HEK293 (cell line): ENCODE measurements at regions of chr11 and their contacts with region 1.

Region 1: DNA sequence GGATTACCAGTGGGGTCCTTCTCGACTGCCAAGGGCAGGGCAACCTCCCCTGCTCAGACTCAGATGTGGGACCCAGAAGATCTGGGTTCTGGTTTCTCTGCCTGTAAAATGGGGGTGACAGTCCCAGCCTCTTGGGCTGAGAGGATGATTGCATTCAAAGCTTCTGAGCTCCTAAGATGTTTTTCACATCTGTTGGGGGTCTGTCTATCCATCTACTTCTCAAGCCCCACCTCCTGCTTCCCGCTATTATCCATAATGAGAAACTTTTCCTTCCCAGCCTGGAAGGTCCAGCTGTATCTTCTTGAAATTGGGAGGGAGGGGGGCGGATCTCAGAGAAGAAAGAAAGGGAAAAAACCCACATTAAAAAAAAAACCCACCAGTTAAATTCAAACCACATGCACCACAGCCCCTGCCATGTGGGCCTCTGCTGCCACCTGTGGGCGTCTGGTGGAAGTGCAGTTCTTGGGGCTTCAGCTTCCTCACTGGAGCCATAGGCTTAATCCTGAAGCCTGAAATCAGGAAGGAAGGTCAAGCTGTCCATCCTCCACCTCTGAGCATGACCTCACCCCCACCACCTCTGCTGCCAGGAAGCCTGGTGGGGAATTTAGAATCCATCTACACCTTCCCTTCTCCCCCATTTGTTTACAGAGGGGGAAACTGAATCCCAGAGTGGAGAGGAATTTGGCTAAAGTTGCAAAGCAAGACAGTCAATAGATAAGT is 27.3 kb downstream of the ARHGEF17 start:
- H3K4me3 ChIP-seq: no peak overlapping the region
- H3K27ac ChIP-seq: no peak overlapping the region; the same call in 1 of the 2 replicates
- H3K4me1 ChIP-seq: peaks cover 4% of the 10 kb centered on the region; the same call in 1 of the 2 replicates
- CTCF ChIP-seq: peak; percentile 73

Region 2: DNA sequence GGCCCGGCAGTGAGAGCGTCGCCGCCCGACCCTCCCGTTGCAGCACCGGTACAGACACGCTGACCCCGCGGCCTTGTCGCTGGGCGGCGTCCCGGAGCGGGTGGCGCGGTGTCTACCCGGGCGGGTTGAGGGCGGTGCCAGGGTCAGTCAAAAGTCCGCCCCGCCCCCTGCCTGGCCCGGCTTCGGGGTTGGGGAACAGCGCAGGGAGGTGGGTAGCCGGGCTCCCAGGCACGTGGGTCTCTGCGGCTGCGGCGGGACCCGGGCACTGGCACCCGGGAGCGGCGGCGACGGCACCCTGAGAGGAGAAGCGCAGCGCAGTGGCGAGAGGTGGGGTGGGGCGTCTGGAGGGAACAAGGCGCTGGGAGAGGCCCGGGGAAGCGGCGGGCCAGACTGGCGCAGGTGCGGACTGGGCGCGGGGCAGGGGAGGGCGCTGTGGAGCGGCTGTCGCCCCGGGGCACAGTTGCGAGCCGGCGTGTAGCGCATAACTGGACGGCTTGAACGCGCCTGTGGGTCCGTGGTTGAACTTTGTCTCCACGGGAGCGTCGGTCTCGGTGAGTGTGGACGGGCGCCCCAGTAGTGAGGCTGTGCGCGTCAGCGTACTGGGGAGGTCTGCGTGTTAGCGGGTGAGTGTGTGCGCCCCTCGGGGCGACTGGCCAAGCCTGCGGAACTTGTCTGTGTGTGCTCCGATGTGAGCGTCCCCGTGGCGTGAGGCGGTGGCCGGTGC is 117.1 kb before region 1 on chr11 and contains the start of gene P2RY2:
- CTCF ChIA-PET with region 1: no interaction called
- POLR2A ChIA-PET with region 1: no interaction called
- H3K4me3 ChIP-seq: peak within 1 kb of the TSS; percentile 41
- H3K27ac ChIP-seq: no peak within 1 kb of the TSS; the same call in 1 of the 2 replicates
- H3K4me1 ChIP-seq: no peaks in the 10 kb centered on the region
- CTCF ChIP-seq: peak; percentile 76

Region 3: DNA sequence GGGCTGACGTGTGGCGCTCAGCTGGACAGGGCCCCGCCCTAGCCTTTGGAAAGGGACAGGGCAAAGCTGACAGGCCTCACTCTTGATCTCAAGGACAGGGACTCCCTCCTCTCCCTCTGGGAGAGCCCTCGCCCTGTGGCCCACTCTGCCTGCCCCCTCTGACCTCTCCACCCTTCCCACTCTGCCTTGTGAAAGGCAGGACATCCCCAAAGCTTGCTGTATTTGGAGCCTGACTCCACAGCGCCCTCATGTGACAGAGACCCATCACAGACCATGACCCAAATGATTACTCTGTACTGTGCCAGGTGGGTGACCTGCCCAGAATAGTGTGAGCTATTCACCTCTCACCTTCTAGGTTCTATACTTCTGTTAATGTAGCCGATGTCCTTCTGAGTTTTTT is 98.5 kb before region 1 on chr11:
- CTCF ChIA-PET with region 1: interaction called, 12 read pairs
- POLR2A ChIA-PET with region 1: no interaction called
- H3K4me3 ChIP-seq: no peak overlapping the region
- H3K27ac ChIP-seq: no peak overlapping the region
- H3K4me1 ChIP-seq: no peaks in the 10 kb centered on the region
- CTCF ChIP-seq: peak; percentile 22; the same call in 1 of the 2 replicates

Region 4: GRCh38 chr11:73288873-73289707 is 46.3 kb before region 1 on chr11:
- CTCF ChIA-PET with region 1: interaction called, 39 read pairs
- POLR2A ChIA-PET with region 1: no interaction called
- H3K4me3 ChIP-seq: peak overlapping the region; percentile 29
- H3K27ac ChIP-seq: no peak overlapping the region; the same call in 1 of the 2 replicates
- H3K4me1 ChIP-seq: no peaks in the 10 kb centered on the region
- CTCF ChIP-seq: peak; percentile 83

Region 5: DNA sequence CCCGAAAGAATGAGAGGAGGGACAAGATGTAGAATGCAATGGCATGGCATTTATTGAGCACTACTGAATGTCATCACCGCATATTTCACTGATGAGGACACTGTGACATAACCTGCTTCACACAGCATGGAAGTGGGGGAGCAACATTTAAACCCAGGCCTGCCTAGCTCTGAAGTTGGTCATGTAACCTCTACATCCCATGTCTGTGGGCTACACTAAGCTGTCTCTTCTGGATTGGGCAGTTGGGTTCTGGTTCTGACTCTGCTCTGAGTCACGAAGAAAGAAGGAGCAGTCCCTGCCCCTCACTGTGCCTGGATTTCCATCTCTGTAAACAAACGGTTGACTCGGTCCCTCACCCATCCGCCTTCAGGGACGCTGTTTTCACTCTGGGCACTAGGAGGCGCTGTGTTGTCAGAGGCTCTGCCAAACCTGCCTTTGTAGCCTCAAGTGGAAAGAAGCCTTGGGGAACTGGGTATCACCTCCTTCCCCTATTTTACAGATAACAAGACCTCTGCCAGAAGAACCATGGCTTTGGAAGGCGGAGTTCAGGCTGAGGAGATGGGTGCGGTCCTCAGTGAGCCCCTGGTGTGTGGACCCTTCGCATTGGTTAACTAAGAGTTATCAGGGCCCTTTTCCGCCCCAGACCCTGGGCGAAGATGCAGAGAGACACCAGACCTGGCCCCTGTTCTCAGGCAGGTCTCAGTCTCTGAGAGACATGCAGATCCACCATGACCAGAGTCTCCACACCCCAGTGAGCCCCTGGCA is 40.0 kb before region 1 on chr11:
- CTCF ChIA-PET with region 1: interaction called, 39 read pairs
- POLR2A ChIA-PET with region 1: no interaction called
- H3K4me3 ChIP-seq: no peak overlapping the region
- H3K27ac ChIP-seq: no peak overlapping the region
- H3K4me1 ChIP-seq: no peaks in the 10 kb centered on the region
- CTCF ChIP-seq: no peak

Region 6: GRCh38 chr11:73314117-73314961 is 21.0 kb before region 1 on chr11:
- CTCF ChIA-PET with region 1: interaction called, 185 read pairs
- POLR2A ChIA-PET with region 1: interaction called, 30 read pairs
- H3K4me3 ChIP-seq: no peak overlapping the region
- H3K27ac ChIP-seq: no peak overlapping the region
- H3K4me1 ChIP-seq: 0 out of 2 replicates have a peak, but pooled peaks cover 7% of the 10 kb centered on the region
- CTCF ChIP-seq: no peak

Region 7: DNA sequence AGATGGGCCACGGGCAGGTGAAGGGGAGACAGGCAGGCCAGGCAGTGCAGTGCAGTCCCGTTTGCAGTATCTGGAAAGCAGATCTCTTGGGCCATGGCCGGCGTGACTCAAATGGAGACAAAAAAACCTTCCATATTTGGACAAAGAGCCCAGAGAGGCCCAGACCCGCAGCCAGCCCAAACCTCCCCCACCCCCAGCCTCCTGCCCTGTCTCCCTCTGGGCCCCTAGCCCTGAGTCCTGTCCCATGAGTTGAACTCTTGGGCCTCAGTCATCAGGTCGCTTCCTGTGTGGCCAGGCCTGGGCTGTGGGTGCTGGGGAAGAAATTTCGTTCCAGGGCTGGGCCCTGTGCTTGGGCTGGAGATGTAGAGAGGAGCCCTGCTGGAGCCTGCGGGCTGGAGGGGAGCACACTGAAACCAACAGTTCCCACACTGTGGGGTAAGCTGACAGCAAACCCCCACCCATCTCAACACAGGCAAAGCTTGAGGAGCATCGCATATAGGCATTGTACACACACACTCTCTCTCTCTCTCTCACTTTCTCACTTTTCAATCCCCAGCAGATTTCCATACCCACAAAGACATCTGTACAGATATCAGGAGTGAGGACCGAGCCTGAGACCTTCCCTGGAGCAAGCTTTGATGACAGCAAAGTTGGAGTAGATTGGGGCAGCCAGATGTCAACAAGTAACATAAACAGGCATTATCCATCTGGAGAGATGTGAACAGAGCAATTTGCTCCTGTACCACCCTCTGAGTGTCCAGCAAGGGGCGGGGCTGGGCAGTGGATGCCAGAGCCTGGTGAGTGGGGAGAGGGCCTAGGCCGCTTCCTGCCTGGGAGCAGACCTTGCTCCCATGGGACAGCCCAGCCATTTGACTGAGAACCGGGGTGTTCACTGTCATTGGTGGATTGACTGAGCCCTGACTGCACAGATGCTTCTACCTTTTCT is 10.1 kb before region 1 on chr11:
- CTCF ChIA-PET with region 1: interaction called, 20 read pairs
- POLR2A ChIA-PET with region 1: no interaction called
- H3K4me3 ChIP-seq: no peak overlapping the region
- H3K27ac ChIP-seq: no peak overlapping the region
- H3K4me1 ChIP-seq: peaks cover 5% of the 10 kb centered on the region; the same call in 1 of the 2 replicates
- CTCF ChIP-seq: no peak

Region 8: DNA sequence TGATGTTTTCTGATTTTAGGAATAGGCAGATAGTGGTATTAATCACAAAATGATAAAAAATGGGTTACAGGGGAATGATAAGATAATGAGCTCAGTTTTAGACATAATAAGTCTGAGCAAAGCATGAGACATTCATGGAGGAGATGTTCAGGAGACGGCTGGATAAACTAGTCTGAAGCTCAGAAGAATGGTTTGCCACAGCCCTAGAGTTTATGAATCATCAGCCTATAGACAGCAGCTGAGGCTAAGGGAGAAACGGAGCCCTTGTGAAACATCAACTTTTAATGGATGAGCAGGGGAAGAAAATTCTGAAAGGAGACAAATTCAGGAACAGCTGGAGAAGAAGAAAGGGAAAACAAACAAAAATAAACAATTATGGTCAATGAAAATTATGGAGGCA is 128.0 kb after region 1 on chr11:
- CTCF ChIA-PET with region 1: no interaction called
- POLR2A ChIA-PET with region 1: no interaction called
- H3K4me3 ChIP-seq: no peak overlapping the region
- H3K27ac ChIP-seq: no peak overlapping the region
- H3K4me1 ChIP-seq: no peaks in the 10 kb centered on the region
- CTCF ChIP-seq: no peak